ENCODE measurements at regions of chr14 and their contacts with region 1.

Region 1: DNA sequence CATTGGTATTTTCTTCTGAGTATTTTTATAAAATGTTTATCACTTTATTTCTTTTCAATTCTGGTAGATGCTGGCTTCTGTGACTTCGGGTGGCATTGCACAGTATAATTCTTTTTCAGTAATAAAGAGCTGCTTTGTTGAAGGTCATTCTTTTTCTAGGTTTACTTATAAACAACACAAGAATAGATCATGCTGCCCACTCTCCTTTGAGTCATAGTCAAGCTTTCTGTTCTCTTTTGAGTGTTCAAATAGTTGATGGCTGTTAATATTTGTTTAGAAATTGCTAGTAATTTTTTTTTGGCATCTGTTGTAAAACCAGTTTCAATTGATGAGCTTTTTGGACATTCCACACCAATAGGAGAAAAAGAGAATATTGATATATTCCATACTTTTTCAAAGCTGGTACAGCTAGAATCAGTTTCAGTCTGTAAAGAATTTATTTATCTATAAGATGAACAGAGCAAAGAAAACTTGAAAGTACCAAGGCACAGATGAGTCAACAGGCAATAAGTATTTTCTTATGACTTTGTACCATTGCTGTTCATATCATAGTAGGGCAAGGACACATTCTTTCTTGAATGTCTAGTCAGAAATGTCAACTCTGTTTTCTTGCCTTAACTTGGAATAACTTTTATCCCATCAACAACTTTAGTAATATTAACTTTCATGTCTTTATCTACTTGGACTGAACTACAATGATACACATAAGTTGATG is 513.0 kb upstream of the SEL1L start:
- DNase-seq: no peak
- ATAC-seq: no peak
- H3K4me3 ChIP-seq: no peak overlapping the region
- H3K27ac ChIP-seq: no peak overlapping the region
- H3K4me1 ChIP-seq: no peaks in the 10 kb centered on the region
- H3K27me3 ChIP-seq: no peaks in the 10 kb centered on the region
- CTCF ChIP-seq: no peak

Region 2: DNA sequence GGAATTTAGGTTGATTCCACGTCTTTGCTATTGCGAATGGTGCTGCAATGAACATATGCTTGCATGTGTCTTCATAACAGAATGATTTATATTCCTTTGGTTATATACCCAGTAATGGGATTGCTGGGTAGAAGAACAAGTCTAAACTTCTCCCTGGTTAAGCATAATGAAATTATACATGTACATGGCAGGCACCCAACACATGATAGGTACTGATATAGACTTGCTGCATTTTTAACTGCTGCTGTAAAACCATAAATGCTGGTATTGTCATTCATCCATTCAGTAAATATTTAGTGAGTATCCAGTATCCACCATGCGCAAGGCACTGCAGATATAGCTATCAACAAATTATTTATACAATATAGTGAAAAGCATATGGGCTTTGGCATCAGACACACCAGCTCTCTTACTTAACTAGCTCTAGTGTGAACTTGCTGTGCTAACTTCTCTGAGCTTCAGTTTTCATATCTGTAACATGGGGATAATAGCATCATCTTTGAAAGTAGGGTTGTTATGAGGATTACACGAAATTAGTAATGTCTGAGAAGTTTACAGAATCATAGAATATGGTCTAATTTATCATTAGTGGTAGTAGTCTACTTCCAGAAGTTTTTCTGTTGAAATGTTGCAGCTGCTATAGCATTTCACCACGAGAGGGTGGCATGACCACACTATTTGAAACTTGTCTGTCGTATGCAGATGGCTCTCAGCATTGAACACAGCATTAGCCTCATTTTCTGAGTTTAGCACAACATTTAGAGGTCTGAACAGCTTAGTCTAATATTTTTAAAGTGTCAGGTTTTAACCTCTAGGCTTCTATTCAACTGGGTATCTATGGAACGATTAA is 481.0 kb before region 1 on chr14:
- CTCF ChIA-PET with region 1: no interaction called
- POLR2A ChIA-PET with region 1: no interaction called
- intact Hi-C with region 1: no loop called
- DNase-seq: peak; percentile 57
- ATAC-seq: peak; percentile 67
- H3K4me3 ChIP-seq: no peak overlapping the region
- H3K27ac ChIP-seq: no peak overlapping the region
- H3K4me1 ChIP-seq: no peaks in the 10 kb centered on the region
- H3K27me3 ChIP-seq: peaks cover 66% of the 10 kb centered on the region
- CTCF ChIP-seq: peak; percentile 76

Region 3: GRCh38 chr14:81871706-81872105 is 175.0 kb before region 1 on chr14:
- CTCF ChIA-PET with region 1: no interaction called
- POLR2A ChIA-PET with region 1: no interaction called
- intact Hi-C with region 1: no loop called
- DNase-seq: no peak
- ATAC-seq: no peak
- H3K4me3 ChIP-seq: no peak overlapping the region
- H3K27ac ChIP-seq: no peak overlapping the region
- H3K4me1 ChIP-seq: no peaks in the 10 kb centered on the region
- H3K27me3 ChIP-seq: no peaks in the 10 kb centered on the region
- CTCF ChIP-seq: no peak

Region 4: GRCh38 chr14:81963846-81964245 is 82.8 kb before region 1 on chr14:
- CTCF ChIA-PET with region 1: no interaction called
- POLR2A ChIA-PET with region 1: no interaction called
- intact Hi-C with region 1: no loop called
- DNase-seq: no peak
- ATAC-seq: no peak
- H3K4me3 ChIP-seq: no peak overlapping the region
- H3K27ac ChIP-seq: no peak overlapping the region
- H3K4me1 ChIP-seq: no peaks in the 10 kb centered on the region
- H3K27me3 ChIP-seq: no peaks in the 10 kb centered on the region
- CTCF ChIP-seq: no peak

Region 5: GRCh38 chr14:82621881-82622450 is 575.3 kb after region 1 on chr14:
- CTCF ChIA-PET with region 1: no interaction called
- POLR2A ChIA-PET with region 1: interaction called, 47 read pairs
- intact Hi-C with region 1: no loop called
- DNase-seq: no peak
- ATAC-seq: no peak
- H3K4me3 ChIP-seq: no peak overlapping the region
- H3K27ac ChIP-seq: no peak overlapping the region
- H3K4me1 ChIP-seq: no peaks in the 10 kb centered on the region
- H3K27me3 ChIP-seq: no peaks in the 10 kb centered on the region
- CTCF ChIP-seq: no peak